ENCODE measurements at regions of chr6 and their contacts with region 1.

Region 1: DNA sequence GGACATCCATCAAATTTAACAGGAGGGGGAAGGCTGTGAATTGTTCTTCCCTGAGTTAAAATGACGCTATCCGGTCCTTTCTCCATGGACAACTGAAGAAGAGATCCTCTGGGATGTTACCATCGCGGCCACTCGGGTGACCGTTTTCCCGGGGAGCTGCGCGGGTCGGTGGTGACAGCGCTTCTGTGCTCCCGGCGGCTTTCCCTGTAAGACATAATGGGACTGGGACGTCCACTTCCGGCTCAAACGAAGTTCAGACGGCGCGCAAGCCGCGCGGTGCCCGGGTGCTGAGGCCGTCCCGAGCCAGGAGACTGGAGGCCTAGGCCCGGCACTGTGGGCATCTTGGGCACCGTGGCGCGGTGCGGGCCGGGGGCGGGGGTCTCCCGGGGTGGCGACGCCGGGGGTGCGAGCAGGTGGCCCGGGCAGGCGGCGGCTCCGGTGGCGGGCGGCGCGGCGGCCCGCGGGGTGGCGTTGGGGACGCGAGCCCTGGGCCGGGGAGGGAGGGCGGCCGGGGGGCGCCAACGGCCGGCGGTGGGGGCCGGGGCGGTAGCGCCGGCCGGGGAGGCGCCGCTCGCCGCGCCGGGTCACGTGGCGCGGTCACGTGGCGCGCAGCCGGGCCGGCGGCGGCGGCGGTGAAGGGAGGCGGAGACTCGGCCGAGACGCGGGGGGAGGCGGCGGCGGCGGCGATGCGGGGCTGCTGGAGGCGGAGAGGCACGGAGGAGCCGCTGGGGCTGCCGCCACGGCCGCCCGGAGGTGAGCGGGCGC is 63.6 kb downstream of the GTF2H5 start:
- DNase-seq: peak; percentile 94
- H3K4me3 Mint-ChIP-seq: peak overlapping the region; percentile 89
- H3K27ac Mint-ChIP-seq: peak overlapping the region; percentile 90
- H3K4me1 Mint-ChIP-seq: peaks cover 23% of the 10 kb centered on the region
- H3K27me3 Mint-ChIP-seq: peaks cover 11% of the 10 kb centered on the region

Region 2: DNA sequence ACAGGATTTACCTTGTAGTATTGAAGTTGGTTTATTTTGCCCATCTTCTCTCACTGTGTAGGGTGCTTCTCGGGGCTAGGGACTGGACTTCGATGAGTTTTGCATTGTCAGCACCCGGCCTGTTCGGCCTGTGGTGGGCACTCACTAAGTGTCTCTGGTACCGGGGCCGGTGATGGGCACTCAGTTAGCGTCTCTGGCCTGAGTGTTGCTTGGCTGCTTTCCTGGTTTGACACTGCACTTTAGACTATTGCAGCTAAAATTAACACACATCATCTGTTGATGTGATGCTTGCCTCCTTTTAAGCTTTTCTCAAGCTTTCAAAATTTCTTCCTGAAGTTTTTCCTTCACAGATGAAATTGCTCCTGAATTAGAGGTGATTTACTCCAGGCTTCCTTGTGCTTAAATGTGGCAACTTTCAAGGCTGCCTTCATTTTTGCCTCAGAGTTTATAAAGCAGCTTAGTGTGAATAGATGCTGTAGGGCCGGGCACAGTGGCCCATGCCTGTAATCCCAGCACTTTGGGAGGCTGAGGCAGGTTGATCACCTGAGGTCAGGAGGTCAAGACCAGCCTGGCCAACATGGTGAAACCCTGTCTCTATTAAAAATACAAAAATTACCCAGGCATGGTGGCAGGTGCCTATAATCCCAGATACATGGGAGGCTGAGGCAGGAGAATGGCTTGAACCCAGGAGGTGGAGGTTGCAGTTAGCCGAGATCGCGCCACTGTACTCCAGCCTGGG is 38.8 kb after region 1 on chr6:
- intact Hi-C with region 1: loop called (anchors 5 kb)
- DNase-seq: no peak
- H3K4me3 Mint-ChIP-seq: peak overlapping the region; percentile 55
- H3K27ac Mint-ChIP-seq: peak overlapping the region; percentile 53
- H3K4me1 Mint-ChIP-seq: peaks cover 20% of the 10 kb centered on the region
- H3K27me3 Mint-ChIP-seq: no peaks in the 10 kb centered on the region

Region 3: GRCh38 chr6:158290659-158291058 is 58.9 kb after region 1 on chr6:
- intact Hi-C with region 1: loop called (anchors 5 kb)
- DNase-seq: peak; percentile 88
- H3K4me3 Mint-ChIP-seq: peak overlapping the region; percentile 69
- H3K27ac Mint-ChIP-seq: peak overlapping the region; percentile 76
- H3K4me1 Mint-ChIP-seq: peaks cover 37% of the 10 kb centered on the region
- H3K27me3 Mint-ChIP-seq: no peaks in the 10 kb centered on the region